Naive thymus-derived CD8-positive, alpha-beta T cell (primary cell): ENCODE measurements at regions of chr22 and their contacts with region 1.

Region 1: DNA sequence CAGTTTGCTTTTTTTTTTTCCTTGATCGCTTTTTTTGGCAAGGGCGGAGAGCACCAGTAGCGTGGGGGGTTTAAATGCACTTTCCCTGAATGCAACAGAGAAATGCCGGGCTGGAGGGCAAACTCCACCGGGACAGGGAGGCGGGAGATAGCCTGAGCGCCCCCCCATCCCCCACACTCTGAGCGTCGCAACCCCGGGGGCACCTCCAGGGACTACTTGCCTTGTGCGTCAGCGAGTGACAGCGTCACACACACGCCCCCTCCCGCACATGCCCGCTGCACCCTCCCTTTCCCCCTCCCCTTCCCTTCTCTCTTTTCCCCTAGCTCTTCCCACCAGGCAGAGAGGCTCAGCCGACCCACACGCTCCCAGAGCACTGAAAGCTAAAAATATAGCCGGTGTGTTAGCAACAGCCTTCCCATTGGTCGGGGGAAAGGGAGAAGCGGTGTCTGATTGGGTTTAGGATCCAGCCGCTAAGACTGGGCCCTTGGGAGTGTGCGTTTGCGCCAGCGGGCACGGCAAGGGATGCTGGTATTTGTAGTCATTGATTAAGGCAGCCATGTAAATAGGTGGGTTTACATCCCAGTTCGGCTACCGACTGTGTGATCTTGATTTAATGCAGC is 1.7 kb upstream of the TOB2 start:
- DNase-seq: peak; percentile 72 to 95 (median 90)
- ATAC-seq: peak; percentile 69 to 77
- H3K4me3 Mint-ChIP-seq: peak overlapping the region; percentile 88 to 100 (median 94)
- H3K27ac Mint-ChIP-seq: peak overlapping the region; percentile 95 to 100 (median 97)
- H3K4me1 Mint-ChIP-seq: peaks cover 20 to 30% (median 21%) of the 10 kb centered on the region in 4 donors
- H3K27me3 Mint-ChIP-seq: no peaks in the 10 kb centered on the region

Region 2: DNA sequence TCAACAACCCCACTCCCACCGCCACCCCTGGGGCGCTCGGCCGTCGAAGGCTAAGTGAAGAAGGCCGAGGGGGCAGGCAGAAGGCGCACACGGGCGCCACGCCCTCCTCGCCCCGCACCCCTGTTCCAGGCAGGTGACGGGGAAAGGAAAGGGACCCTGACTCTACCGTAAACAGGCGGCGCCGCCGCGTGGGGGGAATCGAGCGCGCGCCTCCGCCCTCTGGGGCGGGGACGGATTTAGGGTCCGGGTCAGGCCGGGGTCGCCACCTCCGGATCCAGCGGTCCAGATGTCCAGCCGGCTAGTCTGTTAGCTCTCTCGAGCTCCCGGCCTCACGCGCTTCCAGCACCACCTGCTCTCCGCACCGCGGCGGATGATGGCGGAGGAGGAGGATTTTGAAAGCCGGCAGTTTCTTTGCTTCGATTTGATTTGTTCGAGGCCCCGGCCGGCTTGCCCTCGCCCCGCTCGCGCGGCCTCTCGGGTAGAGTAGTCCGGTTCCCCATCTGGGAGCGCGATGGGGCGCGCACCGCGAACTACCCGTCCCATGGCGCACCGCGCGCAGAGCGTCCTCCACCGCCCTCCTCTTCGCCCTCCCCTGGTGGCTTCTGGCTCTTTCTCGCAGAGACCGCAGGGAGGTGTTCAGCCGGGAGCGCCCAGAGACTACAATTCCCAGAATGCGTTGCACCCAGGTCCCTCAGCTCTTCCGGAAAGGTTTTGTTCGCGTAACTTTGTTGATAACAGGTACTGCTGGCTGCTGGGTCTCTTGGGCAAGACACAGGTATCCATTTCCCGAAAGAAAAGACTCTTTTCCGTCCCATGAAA is 162.3 kb before region 1 on chr22 and contains the start of gene RANGAP1:
- POLR2A ChIA-PET with region 1: interaction called, 13 read pairs
- DNase-seq: peak; percentile 93 to 99 (median 98)
- ATAC-seq: peak; percentile 88 to 94
- H3K4me3 Mint-ChIP-seq: peak within 1 kb of the TSS; percentile 90 to 99 (median 96)
- H3K27ac Mint-ChIP-seq: peak within 1 kb of the TSS; percentile 91 to 100 (median 99)
- H3K4me1 Mint-ChIP-seq: peaks cover 12 to 43% (median 36%) of the 10 kb centered on the region in 4 donors
- H3K27me3 Mint-ChIP-seq: no peaks in the 10 kb centered on the region
- polyA plus RNA-seq, gene RANGAP1: 18.9 to 30.1 (median 23.8) TPM

Region 3: DNA sequence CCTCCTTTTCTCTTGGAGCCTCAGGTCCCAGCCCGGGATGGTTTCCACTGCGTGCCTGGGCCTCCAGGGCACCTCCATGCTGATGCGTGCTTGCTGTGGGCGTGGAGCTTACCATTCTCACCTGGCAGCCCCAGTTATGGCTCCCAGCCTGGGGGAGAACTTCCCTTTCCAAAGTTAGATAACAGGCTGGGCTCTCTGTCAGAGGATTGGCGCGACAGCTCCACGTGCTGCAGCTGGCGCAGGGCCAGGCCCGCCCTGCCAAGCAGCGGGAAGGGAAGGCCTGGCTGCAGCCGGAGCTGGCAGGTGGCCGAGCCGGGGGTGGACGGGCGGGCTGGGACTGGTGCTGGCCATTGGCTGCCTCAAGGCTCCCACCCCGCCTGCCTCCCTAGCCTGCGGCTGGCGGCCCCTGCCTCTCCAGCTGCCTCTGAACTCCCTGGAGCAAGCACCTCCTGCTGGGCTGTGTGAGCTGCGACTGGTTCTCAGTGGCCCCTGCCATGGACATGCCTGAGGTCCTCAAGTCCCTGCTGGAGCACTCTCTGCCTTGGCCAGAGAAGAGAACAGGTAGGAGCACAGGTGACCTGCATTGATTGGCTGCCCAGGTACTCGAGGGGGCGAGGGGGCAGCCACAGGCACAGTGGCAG is 81.1 kb before region 1 on chr22:
- POLR2A ChIA-PET with region 1: no interaction called
- DNase-seq: peak in 2 of 10 donors; percentile 8 to 15
- ATAC-seq: peak; percentile 35 to 57
- H3K4me3 Mint-ChIP-seq: peak overlapping the region in 3 of 10 donors; percentile 10 to 39 (median 14)
- H3K27ac Mint-ChIP-seq: peak overlapping the region in 2 of 10 donors; percentile 40 to 43
- H3K4me1 Mint-ChIP-seq: peaks cover 0 to 11% (median 0%) of the 10 kb centered on the region in 4 donors
- H3K27me3 Mint-ChIP-seq: peaks cover 0 to 16% (median 3%) of the 10 kb centered on the region in 5 donors

Region 4: DNA sequence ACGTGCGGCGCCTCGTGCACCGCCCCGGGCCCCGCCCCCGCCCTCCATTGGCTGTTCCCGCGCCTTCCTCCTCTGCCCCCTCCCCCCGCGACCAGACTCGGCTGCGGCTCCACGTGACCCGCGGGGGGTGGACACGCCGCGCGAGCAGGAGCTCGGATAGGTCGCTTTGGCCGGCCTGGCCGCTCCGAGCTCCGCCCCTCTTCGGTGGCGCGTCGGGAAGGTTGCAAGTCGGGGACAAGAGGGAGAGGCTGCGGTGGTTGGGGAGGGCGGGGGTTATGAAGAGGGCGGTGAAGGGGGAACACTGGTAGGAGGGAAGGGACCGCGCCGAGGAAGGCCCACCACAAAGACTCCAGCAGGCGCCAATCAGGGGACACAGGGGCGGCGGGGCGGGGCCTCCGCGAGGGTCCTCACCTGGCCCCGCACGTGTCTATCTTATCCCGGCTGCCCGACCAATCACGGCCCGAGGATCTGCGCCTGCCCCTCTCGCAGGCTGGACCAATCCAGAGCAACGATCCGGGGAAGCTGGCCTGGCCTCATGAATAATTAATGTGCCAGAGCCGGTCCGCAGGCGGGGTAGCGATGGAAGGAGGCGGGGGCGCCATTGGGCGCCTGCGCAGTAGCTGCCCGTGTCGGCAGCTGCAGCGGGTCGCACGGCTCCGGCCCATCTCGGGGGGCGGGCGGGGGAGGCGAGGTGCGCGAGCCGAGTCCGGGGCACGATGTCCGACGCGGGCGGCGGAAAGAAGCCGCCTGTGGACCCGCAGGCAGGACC is 66.8 kb before region 1 on chr22 and contains the start of gene TEF:
- POLR2A ChIA-PET with region 1: interaction called, 37 read pairs
- DNase-seq: peak; percentile 95 to 100 (median 99)
- ATAC-seq: peak; percentile 83 to 86
- H3K4me3 Mint-ChIP-seq: peak within 1 kb of the TSS; percentile 88 to 97 (median 92)
- H3K27ac Mint-ChIP-seq: peak within 1 kb of the TSS; percentile 92 to 99 (median 98)
- H3K4me1 Mint-ChIP-seq: peaks cover 6 to 24% (median 21%) of the 10 kb centered on the region in 4 donors
- H3K27me3 Mint-ChIP-seq: no peaks in the 10 kb centered on the region
- polyA plus RNA-seq, gene TEF: 2.0 to 5.7 (median 4.4) TPM

Region 5: DNA sequence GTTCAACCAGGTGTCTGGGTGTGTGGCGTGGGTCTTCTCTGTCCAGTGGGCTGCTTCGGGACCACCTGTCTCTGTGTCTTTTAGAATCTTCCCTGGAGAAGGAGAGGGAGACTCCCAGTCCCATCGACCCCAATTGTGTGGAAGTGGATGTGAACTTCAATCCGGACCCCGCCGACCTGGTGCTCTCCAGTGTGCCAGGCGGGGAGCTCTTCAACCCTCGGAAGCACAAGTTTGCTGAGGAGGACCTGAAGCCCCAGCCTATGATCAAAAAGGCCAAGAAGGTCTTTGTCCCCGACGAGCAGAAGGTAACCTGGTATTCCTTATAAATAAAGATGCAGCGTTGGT is 54.3 kb before region 1 on chr22:
- POLR2A ChIA-PET with region 1: no interaction called
- DNase-seq: no peak
- ATAC-seq: no peak
- H3K4me3 Mint-ChIP-seq: no peak overlapping the region
- H3K27ac Mint-ChIP-seq: no peak overlapping the region
- H3K4me1 Mint-ChIP-seq: peaks cover 0 to 2% (median under 1%) of the 10 kb centered on the region in 4 donors
- H3K27me3 Mint-ChIP-seq: no peaks in the 10 kb centered on the region

Region 6: GRCh38 chr22:41417622-41418390 is 30.5 kb before region 1 on chr22:
- POLR2A ChIA-PET with region 1: interaction called, 12 read pairs
- DNase-seq: no peak
- ATAC-seq: no peak
- H3K4me3 Mint-ChIP-seq: no peak overlapping the region
- H3K27ac Mint-ChIP-seq: peak overlapping the region in 3 of 10 donors; percentile 13 to 50 (median 31)
- H3K4me1 Mint-ChIP-seq: peaks cover 9 to 39% (median 23%) of the 10 kb centered on the region in 4 donors
- H3K27me3 Mint-ChIP-seq: no peaks in the 10 kb centered on the region

Region 7: DNA sequence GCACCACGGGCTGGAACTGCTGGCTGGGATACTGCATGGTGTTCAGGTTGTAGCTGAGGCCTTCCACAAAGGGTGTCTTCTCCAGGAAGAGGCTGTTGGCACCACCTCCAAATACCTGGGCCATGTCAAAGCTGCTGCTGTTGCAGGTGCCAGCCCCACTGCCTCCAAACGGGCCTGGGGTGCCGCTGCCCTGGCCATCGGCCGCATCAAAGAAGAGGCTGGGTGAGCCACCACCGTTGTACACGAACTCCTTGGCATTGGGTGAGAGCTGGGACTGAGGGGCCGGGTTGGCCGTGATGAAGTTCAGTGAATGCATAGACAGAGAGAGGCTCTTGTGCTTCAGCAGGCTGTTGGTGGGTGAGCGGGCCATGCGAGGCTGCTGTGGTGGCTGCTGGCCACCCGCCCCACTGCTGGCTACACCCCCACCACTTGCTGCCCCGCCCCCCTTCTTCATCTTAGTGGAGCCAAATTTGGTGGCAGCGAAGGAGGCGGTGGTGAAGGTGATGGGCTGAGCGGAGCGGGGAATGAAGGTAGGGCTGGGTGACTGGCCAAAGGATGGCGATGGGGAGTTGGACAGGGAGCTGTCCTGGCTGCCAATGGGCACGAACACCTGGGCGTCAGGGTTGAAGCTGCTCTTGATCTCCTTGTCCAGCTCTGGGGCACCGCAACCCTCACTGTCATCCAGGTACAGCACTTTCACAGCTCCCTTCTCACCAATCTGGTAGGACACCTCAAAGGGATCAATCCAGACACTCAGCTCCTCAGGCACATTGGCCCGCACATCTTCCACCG is 11.8 kb before region 1 on chr22:
- POLR2A ChIA-PET with region 1: interaction called, 12 read pairs
- DNase-seq: no peak
- ATAC-seq: no peak
- H3K4me3 Mint-ChIP-seq: no peak overlapping the region
- H3K27ac Mint-ChIP-seq: peak overlapping the region in 4 of 10 donors; percentile 16 to 76 (median 52)
- H3K4me1 Mint-ChIP-seq: peaks cover 6 to 33% (median 15%) of the 10 kb centered on the region in 4 donors
- H3K27me3 Mint-ChIP-seq: no peaks in the 10 kb centered on the region

Region 8: DNA sequence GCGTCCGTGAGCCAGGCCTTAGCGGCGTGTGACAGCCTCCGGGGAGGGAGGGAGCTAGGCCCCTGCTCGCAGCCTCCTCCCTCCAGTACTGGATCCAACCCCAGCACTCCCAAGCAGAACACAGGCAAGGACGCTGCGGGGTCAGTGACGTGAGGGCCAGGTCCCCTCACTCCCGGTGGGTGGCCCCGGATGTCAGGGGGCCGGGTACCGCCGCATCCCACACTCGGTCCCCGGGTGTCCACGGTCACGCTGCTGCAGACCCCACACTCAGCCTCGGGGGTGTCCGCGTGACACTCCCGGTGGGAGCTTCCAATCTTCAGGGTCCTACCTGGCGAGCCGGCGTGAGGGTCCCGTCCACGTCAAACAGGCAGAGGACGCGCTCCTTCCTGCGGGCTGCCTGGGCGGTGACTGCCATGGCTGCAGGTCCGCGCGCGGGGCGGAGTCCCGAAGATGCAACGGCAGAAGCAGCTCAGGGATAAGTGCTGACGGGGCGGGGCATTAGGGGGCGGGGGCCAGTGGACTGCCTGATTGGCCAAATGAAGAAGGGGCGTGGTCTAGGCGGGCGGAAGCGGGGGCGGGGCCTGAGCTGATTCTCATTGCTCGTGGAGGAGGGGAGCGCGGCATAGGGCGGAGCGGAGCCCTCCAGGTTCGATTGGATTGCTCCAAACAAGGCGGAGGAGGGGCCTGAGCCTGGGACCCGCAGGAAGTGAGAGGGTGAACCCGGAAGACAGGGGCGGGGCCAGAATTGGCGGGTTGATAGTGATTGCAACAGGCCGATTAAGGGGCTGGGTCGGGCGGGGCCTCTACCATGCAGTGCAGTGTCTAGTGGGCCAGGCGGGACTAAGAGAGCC is 141.3 kb after region 1 on chr22 and contains the start of gene PMM1:
- POLR2A ChIA-PET with region 1: interaction called, 10 read pairs
- DNase-seq: peak; percentile 98 to 100 (median 100)
- ATAC-seq: peak; percentile 94 to 97
- H3K4me3 Mint-ChIP-seq: peak within 1 kb of the TSS; percentile 84 to 96 (median 94)
- H3K27ac Mint-ChIP-seq: peak within 1 kb of the TSS; percentile 28 to 95 (median 89)
- H3K4me1 Mint-ChIP-seq: peaks cover 5 to 30% (median 15%) of the 10 kb centered on the region in 4 donors
- H3K27me3 Mint-ChIP-seq: no peaks in the 10 kb centered on the region
- polyA plus RNA-seq, gene PMM1: 29.9 to 32.8 (median 32.4) TPM